Naive thymus-derived CD4-positive, alpha-beta T cell (primary cell): ENCODE measurements at regions of chr1 and their contacts with region 1.

Region 1: DNA sequence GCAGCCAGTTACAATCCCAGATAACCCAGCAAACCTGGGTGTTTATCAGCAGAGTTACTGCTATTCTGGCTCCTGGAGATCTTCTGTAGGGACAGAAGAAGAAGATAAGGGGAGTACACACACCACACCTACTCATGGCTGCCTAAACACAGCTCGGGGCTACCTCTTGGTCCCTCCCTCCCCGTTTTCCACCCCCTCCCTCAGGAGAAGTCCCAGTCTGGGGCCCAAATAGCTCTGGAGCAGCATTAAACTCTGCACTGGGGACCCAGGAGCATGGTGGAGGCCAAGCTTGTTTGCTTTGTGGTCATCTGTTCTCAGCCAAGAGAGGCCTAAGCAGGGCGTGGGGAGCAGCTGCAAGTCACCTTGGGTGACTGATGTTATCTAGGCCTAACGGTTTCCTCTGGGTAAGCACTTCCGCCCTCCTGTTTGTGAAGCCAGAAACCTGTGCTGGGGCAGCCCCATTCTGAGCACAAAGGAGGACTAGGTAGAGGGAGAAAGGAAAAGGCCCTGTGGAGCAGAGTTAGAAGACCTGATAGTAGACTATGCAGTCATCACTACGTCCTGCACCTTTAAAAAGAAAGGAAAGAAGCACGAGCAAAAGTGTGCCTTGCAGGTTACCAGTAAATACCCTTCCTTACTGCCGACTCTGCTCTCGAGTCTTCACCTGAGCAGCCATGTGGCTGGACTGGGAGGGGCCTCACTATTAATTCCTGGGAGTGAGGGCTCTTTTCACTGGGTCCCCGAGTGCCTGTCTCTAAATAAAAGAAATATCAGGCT is 2.0 kb upstream of the RCSD1 start:
- DNase-seq: peak; percentile 33 to 84 (median 73)
- ATAC-seq: peak; percentile 84
- H3K4me3 ChIP-seq: peak overlapping the region; percentile 48
- H3K4me3 Mint-ChIP-seq: peak overlapping the region; percentile 82 to 99 (median 92)
- H3K27ac ChIP-seq: peak overlapping the region; percentile 94
- H3K27ac Mint-ChIP-seq: peak overlapping the region; percentile 85 to 98 (median 95)
- H3K4me1 ChIP-seq: peaks cover 44 to 46% of the 10 kb centered on the region in 2 donors
- H3K4me1 Mint-ChIP-seq: peaks cover 48 to 69% (median 63%) of the 10 kb centered on the region in 7 donors
- H3K27me3 ChIP-seq: no peaks in the 10 kb centered on the region
- H3K27me3 Mint-ChIP-seq: no peaks in the 10 kb centered on the region

Region 2: DNA sequence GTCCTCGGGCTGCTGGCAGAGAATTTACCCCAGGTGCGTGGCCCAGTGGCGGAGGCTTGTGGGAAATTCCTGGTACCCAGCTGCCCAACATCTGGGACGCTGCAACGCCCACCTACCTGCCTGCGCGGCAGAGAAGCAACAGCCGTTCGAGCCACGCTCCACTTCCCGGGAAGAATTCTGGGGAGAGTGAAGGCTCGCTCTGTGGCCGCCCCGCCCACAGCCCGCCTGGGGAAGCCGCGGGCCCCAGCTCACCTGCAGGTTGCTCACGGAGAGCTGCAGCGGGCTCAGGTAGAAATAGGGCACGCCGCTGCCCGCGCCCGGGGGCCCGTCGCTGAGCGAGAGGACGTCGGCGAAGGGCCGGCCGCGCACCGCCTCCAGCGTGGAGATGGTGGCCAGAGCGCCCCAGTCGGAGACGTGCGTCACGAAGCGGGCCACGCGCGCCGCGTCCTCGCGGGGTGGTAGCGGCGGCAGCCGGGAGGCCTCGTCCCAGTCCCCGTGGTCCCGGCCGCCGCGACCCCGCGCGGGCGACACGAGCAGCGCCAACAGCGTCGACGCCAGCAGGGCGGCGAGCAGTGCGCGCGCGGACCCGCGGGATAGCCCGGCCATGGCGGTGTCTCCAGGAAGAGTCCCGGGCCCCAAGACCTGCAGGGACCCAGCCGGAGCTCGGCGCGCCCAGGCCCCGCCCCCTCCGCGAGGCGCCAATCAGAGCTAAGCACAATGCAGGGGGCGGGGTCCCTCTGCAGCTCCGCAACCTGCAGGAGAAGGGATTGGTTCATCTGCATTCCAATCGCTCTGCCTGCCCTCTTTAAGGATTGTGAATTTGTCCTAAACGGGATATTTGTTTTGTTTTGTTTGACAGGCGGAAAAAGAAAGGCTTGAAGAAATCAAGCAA is 74.7 kb before region 1 on chr1 and contains the start of gene CREG1:
- CTCF ChIA-PET with region 1: interaction called, 3 read pairs
- POLR2A ChIA-PET with region 1: interaction called, 6 read pairs
- intact Hi-C with region 1: loop called in 1 of 2 experiments (anchors 2 kb)
- DNase-seq: peak; percentile 82 to 92 (median 88)
- ATAC-seq: peak; percentile 98
- H3K4me3 ChIP-seq: peak within 1 kb of the TSS; percentile 71
- H3K4me3 Mint-ChIP-seq: peak within 1 kb of the TSS; percentile 85 to 97 (median 92)
- H3K27ac ChIP-seq: peak within 1 kb of the TSS; percentile 72
- H3K27ac Mint-ChIP-seq: peak within 1 kb of the TSS; percentile 43 to 88 (median 80)
- H3K4me1 ChIP-seq: peaks cover 19% of the 10 kb centered on the region in 2 donors
- H3K4me1 Mint-ChIP-seq: peaks cover 35 to 58% (median 46%) of the 10 kb centered on the region in 7 donors
- H3K27me3 ChIP-seq: no peaks in the 10 kb centered on the region
- H3K27me3 Mint-ChIP-seq: peaks cover 0 to 4% (median 0%) of the 10 kb centered on the region in 5 donors
- total RNA-seq, gene CREG1: 10.6 to 33.4 (median 23.1) TPM

Region 3: GRCh38 chr1:167617153-167618147 is 10.6 kb before region 1 on chr1:
- CTCF ChIA-PET with region 1: interaction called, 8 read pairs
- POLR2A ChIA-PET with region 1: interaction called, 254 read pairs
- intact Hi-C with region 1: loop called (anchors 1 kb)
- DNase-seq: peak in 3 of 9 donors; percentile 22 to 28 (median 22)
- ATAC-seq: peak; percentile 85
- H3K4me3 ChIP-seq: peak overlapping the region; percentile 14
- H3K4me3 Mint-ChIP-seq: peak overlapping the region; percentile 73 to 96 (median 78)
- H3K27ac ChIP-seq: peak overlapping the region; percentile 66
- H3K27ac Mint-ChIP-seq: peak overlapping the region; percentile 83 to 96 (median 90)
- H3K4me1 ChIP-seq: peaks cover 16 to 35% of the 10 kb centered on the region in 2 donors
- H3K4me1 Mint-ChIP-seq: peaks cover 47 to 83% (median 69%) of the 10 kb centered on the region in 7 donors
- H3K27me3 ChIP-seq: no peaks in the 10 kb centered on the region
- H3K27me3 Mint-ChIP-seq: no peaks in the 10 kb centered on the region

Region 4: GRCh38 chr1:167641786-167642500 is 13.9 kb after region 1 on chr1:
- CTCF ChIA-PET with region 1: interaction called, 9 read pairs
- POLR2A ChIA-PET with region 1: interaction called, 39 read pairs
- intact Hi-C with region 1: loop called (anchors 1 kb)
- DNase-seq: peak in 2 of 9 donors; percentile 23 to 26
- ATAC-seq: peak; percentile 50
- H3K4me3 ChIP-seq: peak overlapping the region; percentile 9
- H3K4me3 Mint-ChIP-seq: peak overlapping the region; percentile 16 to 72 (median 56)
- H3K27ac ChIP-seq: peak overlapping the region; percentile 0
- H3K27ac Mint-ChIP-seq: peak overlapping the region; percentile 37 to 83 (median 76)
- H3K4me1 ChIP-seq: peaks cover 68 to 75% of the 10 kb centered on the region in 2 donors
- H3K4me1 Mint-ChIP-seq: peaks cover 79 to 99% (median 93%) of the 10 kb centered on the region in 7 donors
- H3K27me3 ChIP-seq: no peaks in the 10 kb centered on the region
- H3K27me3 Mint-ChIP-seq: no peaks in the 10 kb centered on the region